Sigmoid colon (tissue), 7 donors: ENCODE measurements at regions of chr1 and their contacts with region 1.

Region 1: GRCh38 chr1:212162635-212163034 is 122.6 kb upstream of the PPP2R5A start:
- DNase-seq: peak; percentile 77
- H3K4me3 ChIP-seq: no peak overlapping the region
- H3K27ac ChIP-seq: peak overlapping the region; percentile 2 to 42 (median 34)
- H3K4me1 ChIP-seq: peaks cover 0 to 32% (median 19%) of the 10 kb centered on the region in 4 donors
- H3K27me3 ChIP-seq: no peaks in the 10 kb centered on the region
- CTCF ChIP-seq: no peak
- EP300 ChIP-seq: no peak
- POLR2A ChIP-seq: no peak

Region 2: DNA sequence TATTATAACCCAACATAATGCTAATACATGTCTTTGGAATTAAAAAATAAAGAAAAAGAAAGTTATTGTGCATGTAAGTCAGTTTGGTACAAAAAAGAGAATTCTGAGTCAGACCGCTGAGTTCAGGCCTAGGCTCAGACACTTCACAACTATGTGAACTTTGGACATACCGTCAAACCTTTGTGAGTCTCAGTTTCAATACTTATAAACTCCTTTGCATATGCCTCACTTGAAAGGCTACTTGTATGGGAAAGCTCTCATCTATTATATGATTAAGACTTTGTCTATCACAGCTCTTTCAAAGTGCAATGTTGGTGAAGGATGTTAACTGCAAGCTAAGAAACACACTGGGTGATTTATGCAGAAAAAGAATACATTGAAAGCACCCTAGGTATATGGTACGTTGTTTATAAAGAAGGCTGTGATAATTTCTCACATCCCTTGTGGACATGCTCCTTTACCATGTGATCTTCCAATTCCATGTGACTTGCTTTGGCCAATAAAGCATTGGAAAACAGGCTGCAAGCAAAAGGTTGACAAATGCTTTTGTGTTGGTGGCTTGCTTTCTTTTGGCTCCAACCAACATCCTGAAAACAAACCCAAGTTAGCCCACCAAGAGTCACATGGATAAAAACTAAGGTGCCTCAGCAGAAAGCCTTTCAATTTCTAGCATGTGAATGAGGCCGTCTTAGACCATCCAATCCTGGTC is 176.9 kb before region 1 on chr1:
- intact Hi-C with region 1: no loop called
- DNase-seq: no peak
- H3K4me3 ChIP-seq: no peak overlapping the region
- H3K27ac ChIP-seq: no peak overlapping the region
- H3K4me1 ChIP-seq: no peaks in the 10 kb centered on the region
- H3K27me3 ChIP-seq: no peaks in the 10 kb centered on the region
- CTCF ChIP-seq: no peak
- EP300 ChIP-seq: no peak
- POLR2A ChIP-seq: no peak

Region 3: GRCh38 chr1:212124690-212125582 is 37.7 kb before region 1 on chr1:
- intact Hi-C with region 1: no loop called
- DNase-seq: no peak
- H3K4me3 ChIP-seq: no peak overlapping the region
- H3K27ac ChIP-seq: no peak overlapping the region
- H3K4me1 ChIP-seq: no peaks in the 10 kb centered on the region
- H3K27me3 ChIP-seq: no peaks in the 10 kb centered on the region
- CTCF ChIP-seq: no peak
- EP300 ChIP-seq: no peak
- POLR2A ChIP-seq: no peak

Region 4: GRCh38 chr1:212234431-212235395 is 72.1 kb after region 1 on chr1:
- intact Hi-C with region 1: loop called (anchors 5 kb)
- DNase-seq: peak; percentile 83
- H3K4me3 ChIP-seq: no peak overlapping the region
- H3K27ac ChIP-seq: peak overlapping the region; percentile 59 to 80 (median 62)
- H3K4me1 ChIP-seq: peaks cover 0 to 29% (median 27%) of the 10 kb centered on the region in 4 donors
- H3K27me3 ChIP-seq: no peaks in the 10 kb centered on the region
- CTCF ChIP-seq: no peak
- EP300 ChIP-seq: no peak
- POLR2A ChIP-seq: no peak